Heart left ventricle (tissue), 16 donors: ENCODE measurements at regions of chr2 and their contacts with region 1.

Region 1: DNA sequence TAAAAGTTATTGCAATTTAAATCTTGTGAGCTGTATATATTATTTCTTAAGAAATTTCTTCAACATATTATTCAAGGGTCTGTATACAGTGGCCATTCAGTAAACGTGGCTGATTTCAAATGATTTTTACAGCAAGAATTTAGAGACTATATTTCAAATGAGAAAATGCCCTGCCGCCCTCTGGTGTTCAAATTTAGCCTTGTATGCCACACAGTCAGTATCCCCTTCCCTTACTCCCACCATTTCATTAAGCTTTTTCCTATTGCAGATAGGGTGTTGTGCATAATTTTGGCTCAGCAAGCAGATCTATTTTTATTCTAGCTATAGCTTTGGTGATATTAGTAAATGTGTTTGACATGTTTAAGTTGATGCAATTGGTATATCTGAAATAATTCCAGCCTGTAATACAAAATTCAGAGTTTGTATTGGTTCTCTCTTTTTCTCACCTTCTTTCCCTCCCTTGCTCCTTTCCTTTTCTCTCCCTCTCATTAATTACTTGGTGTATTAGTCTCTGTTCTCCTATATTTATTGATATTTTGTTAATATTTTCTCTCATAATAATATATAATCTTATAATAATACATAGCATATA is 22.8 kb upstream of the SCN7A start:
- DNase-seq: peak in 3 of 5 donors; percentile 18 to 45 (median 27)
- ATAC-seq: peak in 2 of 4 donors; percentile 49 to 75
- H3K4me3 ChIP-seq: no peak overlapping the region
- H3K27ac ChIP-seq: no peak overlapping the region
- H3K4me1 ChIP-seq: peaks cover 0 to 6% (median 0%) of the 10 kb centered on the region in 12 donors
- H3K27me3 ChIP-seq: no peaks in the 10 kb centered on the region
- CTCF ChIP-seq: peak; percentile 40 to 75 (median 56)
- POLR2A ChIP-seq: no peak

Region 2: DNA sequence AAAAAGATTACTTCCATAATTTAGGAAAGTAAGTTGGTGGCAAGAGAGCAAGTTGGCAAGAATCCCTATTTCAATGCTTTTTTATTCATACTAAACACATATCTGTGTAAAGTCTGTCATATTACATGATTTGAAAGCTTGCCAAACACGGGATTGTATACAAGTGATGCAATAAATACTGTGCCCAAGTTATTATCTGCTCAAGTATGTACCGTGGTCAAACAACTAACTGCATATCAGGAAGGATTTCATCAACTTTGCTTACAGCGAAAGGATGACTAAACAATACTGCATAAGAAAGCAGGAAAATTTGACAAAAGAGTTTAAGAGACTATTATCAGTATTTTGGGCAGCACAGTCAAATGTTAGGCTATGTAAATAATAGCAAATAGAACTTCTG is 319.4 kb before region 1 on chr2:
- intact Hi-C with region 1: no loop called
- DNase-seq: no peak
- ATAC-seq: no peak
- H3K4me3 ChIP-seq: no peak overlapping the region
- H3K27ac ChIP-seq: no peak overlapping the region
- H3K4me1 ChIP-seq: no peaks in the 10 kb centered on the region
- H3K27me3 ChIP-seq: no peaks in the 10 kb centered on the region
- CTCF ChIP-seq: no peak
- POLR2A ChIP-seq: no peak

Region 3: DNA sequence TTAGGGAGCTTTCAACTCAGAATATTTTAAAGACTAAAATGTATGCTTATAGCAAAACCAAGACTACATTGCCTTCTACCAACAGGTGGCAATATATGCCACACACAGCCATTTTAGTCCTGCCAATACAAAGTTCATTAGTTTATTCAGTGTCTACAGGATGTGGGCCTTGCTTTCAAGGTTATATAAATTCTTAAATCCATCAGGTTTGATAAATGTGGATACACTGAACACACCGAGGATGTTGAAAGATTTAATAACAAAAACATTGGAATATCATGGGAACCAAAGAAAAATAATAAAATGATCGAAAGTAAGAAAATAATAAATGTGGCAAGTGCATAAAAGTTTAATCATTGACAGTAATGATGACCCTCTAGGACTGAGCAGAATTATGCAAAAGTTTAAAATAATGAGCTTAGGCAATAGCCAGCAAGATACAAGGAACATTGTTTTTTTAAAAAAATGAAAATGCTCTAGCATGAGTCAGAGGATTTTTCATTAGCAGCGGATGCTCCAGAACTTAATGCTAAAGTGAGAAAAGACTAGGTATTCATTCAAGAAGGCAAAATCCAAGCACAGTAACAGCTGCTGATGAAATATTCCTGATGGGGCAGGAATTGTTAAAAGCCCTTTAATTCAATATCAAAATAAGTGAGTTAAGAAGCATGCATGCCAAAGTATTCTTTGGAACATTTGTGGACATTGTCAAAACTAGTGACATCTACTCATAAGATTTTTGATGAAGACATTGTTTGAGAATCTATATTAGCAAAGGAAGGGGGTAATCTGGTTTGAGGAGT is 155.3 kb before region 1 on chr2:
- intact Hi-C with region 1: loop called in 5 of 10 experiments (anchors 5 to 10 kb)
- DNase-seq: no peak
- ATAC-seq: no peak
- H3K4me3 ChIP-seq: no peak overlapping the region
- H3K27ac ChIP-seq: no peak overlapping the region
- H3K4me1 ChIP-seq: no peaks in the 10 kb centered on the region
- H3K27me3 ChIP-seq: no peaks in the 10 kb centered on the region
- CTCF ChIP-seq: peak in 10 of 12 donors; percentile 16 to 50 (median 31)
- POLR2A ChIP-seq: no peak

Region 4: DNA sequence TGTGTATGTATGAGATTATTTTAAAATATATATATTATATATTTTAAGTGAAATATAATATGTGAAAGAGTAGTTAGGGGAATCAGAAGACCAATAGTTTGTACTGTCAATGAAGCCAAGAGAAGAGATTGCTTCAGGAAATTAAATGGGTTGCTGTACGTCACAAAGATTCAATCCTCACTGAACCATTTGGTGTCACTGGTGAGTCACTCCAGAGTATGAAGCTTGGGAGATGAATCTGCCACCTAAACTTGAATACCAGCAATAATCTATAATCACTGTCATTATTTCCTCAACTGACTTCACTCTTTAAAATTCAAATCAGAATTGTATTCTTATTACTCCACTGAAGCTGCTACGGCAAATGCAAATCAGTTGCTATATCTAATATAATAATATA is 99.1 kb before region 1 on chr2:
- intact Hi-C with region 1: loop called in 2 of 10 experiments (anchors 5 to 10 kb)
- DNase-seq: no peak
- ATAC-seq: no peak
- H3K4me3 ChIP-seq: no peak overlapping the region
- H3K27ac ChIP-seq: no peak overlapping the region
- H3K4me1 ChIP-seq: no peaks in the 10 kb centered on the region
- H3K27me3 ChIP-seq: no peaks in the 10 kb centered on the region
- CTCF ChIP-seq: peak in 5 of 12 donors; percentile 14 to 43 (median 36)
- POLR2A ChIP-seq: no peak

Region 5: GRCh38 chr2:166424841-166425240 is 92.0 kb before region 1 on chr2:
- intact Hi-C with region 1: loop called in 1 of 10 experiments (anchors 10 kb)
- DNase-seq: no peak
- ATAC-seq: peak in 1 of 4 donors; percentile 40
- H3K4me3 ChIP-seq: no peak overlapping the region
- H3K27ac ChIP-seq: no peak overlapping the region
- H3K4me1 ChIP-seq: no peaks in the 10 kb centered on the region
- H3K27me3 ChIP-seq: no peaks in the 10 kb centered on the region
- CTCF ChIP-seq: no peak
- POLR2A ChIP-seq: no peak